ENCODE measurements at regions of chr18 and their contacts with region 1.

Region 1: GRCh38 chr18:75727456-75727855 is 300.0 kb upstream of the SMIM21 start:
- DNase-seq: no peak
- ATAC-seq: peak; percentile 73
- H3K4me3 ChIP-seq: no peak overlapping the region
- H3K27ac ChIP-seq: no peak overlapping the region
- H3K4me1 ChIP-seq: no peaks in the 10 kb centered on the region
- H3K27me3 ChIP-seq: no peaks in the 10 kb centered on the region; a peak in 2 of 4 replicates
- CTCF ChIP-seq: peak; percentile 42 to 53 (median 44)
- EP300 ChIP-seq: no peak
- POLR2A ChIP-seq: no peak
- RAD21 ChIP-seq: peak; percentile 49

Region 2: GRCh38 chr18:74645679-74646078 is 1081.8 kb before region 1 on chr18:
- CTCF ChIA-PET with region 1: no interaction called
- POLR2A ChIA-PET with region 1: no interaction called
- RAD21 ChIA-PET with region 1: no interaction called
- SMC1A ChIA-PET with region 1: no interaction called
- in situ Hi-C with region 1: loop called (anchors 5 kb)
- intact Hi-C with region 1: no loop called
- DNase-seq: no peak
- ATAC-seq: no peak
- H3K4me3 ChIP-seq: no peak overlapping the region
- H3K27ac ChIP-seq: no peak overlapping the region
- H3K4me1 ChIP-seq: no peaks in the 10 kb centered on the region
- H3K27me3 ChIP-seq: no peaks in the 10 kb centered on the region
- CTCF ChIP-seq: no peak
- EP300 ChIP-seq: no peak
- POLR2A ChIP-seq: no peak
- RAD21 ChIP-seq: no peak

Region 3: DNA sequence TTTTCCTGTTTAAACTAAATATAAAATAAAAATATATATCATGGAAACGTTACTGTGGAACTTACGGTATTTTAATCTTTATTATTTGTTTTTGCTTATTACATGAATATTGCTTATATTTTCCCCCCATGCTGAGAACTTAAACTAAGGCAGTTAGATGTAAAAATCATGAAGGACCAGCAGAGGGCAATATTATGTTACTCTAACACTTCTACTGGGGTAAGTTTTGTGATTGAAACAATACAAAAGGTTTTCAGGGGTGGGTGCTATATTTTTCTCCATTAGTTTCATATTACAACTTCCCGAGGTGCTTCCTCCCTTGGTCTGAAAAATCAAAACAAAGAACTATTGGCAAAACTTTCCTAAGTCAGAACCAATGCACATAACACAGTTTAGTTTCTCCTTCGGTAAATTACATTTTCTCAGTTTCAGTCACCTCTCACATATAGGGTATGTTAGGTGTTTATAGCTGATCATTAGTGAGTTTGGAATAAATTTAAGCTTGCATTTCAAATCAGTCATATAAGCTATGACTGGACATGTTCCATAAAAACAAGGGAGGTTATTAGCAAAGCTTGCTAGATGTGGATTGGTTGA is 1075.0 kb before region 1 on chr18:
- CTCF ChIA-PET with region 1: interaction called, 5 read pairs
- POLR2A ChIA-PET with region 1: no interaction called
- RAD21 ChIA-PET with region 1: no interaction called
- SMC1A ChIA-PET with region 1: interaction called, 4 read pairs
- in situ Hi-C with region 1: loop called (anchors 5 kb)
- intact Hi-C with region 1: loop called (anchors 2 kb)
- DNase-seq: no peak
- ATAC-seq: peak; percentile 85
- H3K4me3 ChIP-seq: no peak overlapping the region
- H3K27ac ChIP-seq: no peak overlapping the region
- H3K4me1 ChIP-seq: no peaks in the 10 kb centered on the region
- H3K27me3 ChIP-seq: no peaks in the 10 kb centered on the region
- CTCF ChIP-seq: peak; percentile 30 to 62 (median 58); a peak in 4 of 6 replicates
- EP300 ChIP-seq: no peak
- POLR2A ChIP-seq: no peak
- RAD21 ChIP-seq: peak; percentile 78